K562 (cell line): ENCODE measurements at regions of chr1 and their contacts with region 1.

Region 1: GRCh38 chr1:110203021-110203661 is 7.0 kb upstream of the KCNC4 start:
- DNase-seq: peak; percentile 64 to 80 (median 68)
- ATAC-seq: peak; percentile 75
- H3K4me3 ChIP-seq: no peak overlapping the region
- H3K27ac ChIP-seq: no peak overlapping the region
- H3K4me1 ChIP-seq: no peaks in the 10 kb centered on the region
- H3K27me3 ChIP-seq: peaks cover 3 to 42% of the 10 kb centered on the region in 2 experiments; a peak in 3 of 5 replicates
- CTCF ChIP-seq: peak; percentile 82 to 95 (median 92)
- EP300 ChIP-seq: no peak
- POLR2A ChIP-seq: no peak
- RAD21 ChIP-seq: peak; percentile 93 to 97

Region 2: GRCh38 chr1:109773146-109773899 is 429.8 kb before region 1 on chr1:
- CTCF ChIA-PET with region 1: no interaction called
- POLR2A ChIA-PET with region 1: no interaction called
- in situ Hi-C with region 1: no loop called
- intact Hi-C with region 1: no loop called
- DNase-seq: peak; percentile 67 to 90 (median 76)
- ATAC-seq: peak; percentile 95
- H3K4me3 ChIP-seq: no peak overlapping the region
- H3K27ac ChIP-seq: no peak overlapping the region
- H3K4me1 ChIP-seq: peaks cover 11 to 12% of the 10 kb centered on the region in 2 experiments; a peak in 3 of 5 replicates
- H3K27me3 ChIP-seq: peaks cover 2 to 23% of the 10 kb centered on the region in 2 experiments; a peak in 3 of 5 replicates
- CTCF ChIP-seq: peak; percentile 97 to 99 (median 98)
- EP300 ChIP-seq: no peak
- POLR2A ChIP-seq: no peak
- RAD21 ChIP-seq: peak; percentile 100

Region 3: GRCh38 chr1:110155878-110156522 is 47.1 kb before region 1 on chr1:
- CTCF ChIA-PET with region 1: no interaction called
- POLR2A ChIA-PET with region 1: no interaction called
- in situ Hi-C with region 1: no loop called
- intact Hi-C with region 1: no loop called
- DNase-seq: peak; percentile 67 to 79 (median 77)
- ATAC-seq: peak; percentile 93
- H3K4me3 ChIP-seq: no peak overlapping the region
- H3K27ac ChIP-seq: no peak overlapping the region
- H3K4me1 ChIP-seq: peaks cover 0 to 5% of the 10 kb centered on the region in 2 experiments; a peak in 1 of 5 replicates
- H3K27me3 ChIP-seq: peaks cover 0 to 36% of the 10 kb centered on the region in 2 experiments; a peak in 4 of 5 replicates
- CTCF ChIP-seq: no peak
- EP300 ChIP-seq: no peak
- POLR2A ChIP-seq: no peak
- RAD21 ChIP-seq: no peak

Region 4: GRCh38 chr1:110262846-110263631 is 59.9 kb after region 1 on chr1:
- CTCF ChIA-PET with region 1: no interaction called
- POLR2A ChIA-PET with region 1: no interaction called
- in situ Hi-C with region 1: no loop called
- intact Hi-C with region 1: loop called (anchors 2 kb)
- DNase-seq: peak; percentile 30 to 63 (median 52)
- ATAC-seq: peak; percentile 73
- H3K4me3 ChIP-seq: no peak overlapping the region
- H3K27ac ChIP-seq: no peak overlapping the region
- H3K4me1 ChIP-seq: no peaks in the 10 kb centered on the region; a peak in 1 of 5 replicates
- H3K27me3 ChIP-seq: peaks cover 33 to 49% of the 10 kb centered on the region in 2 experiments
- CTCF ChIP-seq: peak in 2 of 3 experiments; percentile 2 to 23; a peak in 1 of 6 replicates
- EP300 ChIP-seq: no peak
- POLR2A ChIP-seq: no peak
- RAD21 ChIP-seq: peak in 1 of 2 experiments; percentile 44; a peak in 2 of 4 replicates

Region 5: GRCh38 chr1:110412576-110412975 is 209.4 kb after region 1 on chr1:
- CTCF ChIA-PET with region 1: interaction called, 4 read pairs
- POLR2A ChIA-PET with region 1: interaction called, 3 read pairs
- in situ Hi-C with region 1: loop called (anchors 5 kb)
- intact Hi-C with region 1: loop called (anchors 1 kb)
- DNase-seq: peak; percentile 84 to 94 (median 86)
- ATAC-seq: peak; percentile 90
- H3K4me3 ChIP-seq: no peak overlapping the region
- H3K27ac ChIP-seq: peak overlapping the region; percentile 11; the same call in 2 of the 3 replicates
- H3K4me1 ChIP-seq: peaks cover 0 to 40% of the 10 kb centered on the region in 2 experiments; a peak in 4 of 5 replicates
- H3K27me3 ChIP-seq: no peaks in the 10 kb centered on the region
- CTCF ChIP-seq: peak; percentile 92 to 98 (median 97)
- EP300 ChIP-seq: peak; percentile 21; the same call in 1 of the 2 replicates
- POLR2A ChIP-seq: no peak
- RAD21 ChIP-seq: peak; percentile 99

Region 6: GRCh38 chr1:110455151-110455550 is 252.0 kb after region 1 on chr1:
- CTCF ChIA-PET with region 1: interaction called, 58 read pairs
- POLR2A ChIA-PET with region 1: interaction called, 9 read pairs
- in situ Hi-C with region 1: loop called (anchors 5 kb)
- intact Hi-C with region 1: loop called (anchors 1 kb)
- DNase-seq: peak; percentile 44 to 72 (median 58)
- ATAC-seq: peak; percentile 89
- H3K4me3 ChIP-seq: no peak overlapping the region
- H3K27ac ChIP-seq: no peak overlapping the region
- H3K4me1 ChIP-seq: peaks cover 0 to 4% of the 10 kb centered on the region in 2 experiments; a peak in 2 of 5 replicates
- H3K27me3 ChIP-seq: peaks cover 32 to 61% of the 10 kb centered on the region in 2 experiments
- CTCF ChIP-seq: peak; percentile 82 to 94 (median 91)
- EP300 ChIP-seq: no peak
- POLR2A ChIP-seq: no peak
- RAD21 ChIP-seq: peak; percentile 96 to 97

Region 7: DNA sequence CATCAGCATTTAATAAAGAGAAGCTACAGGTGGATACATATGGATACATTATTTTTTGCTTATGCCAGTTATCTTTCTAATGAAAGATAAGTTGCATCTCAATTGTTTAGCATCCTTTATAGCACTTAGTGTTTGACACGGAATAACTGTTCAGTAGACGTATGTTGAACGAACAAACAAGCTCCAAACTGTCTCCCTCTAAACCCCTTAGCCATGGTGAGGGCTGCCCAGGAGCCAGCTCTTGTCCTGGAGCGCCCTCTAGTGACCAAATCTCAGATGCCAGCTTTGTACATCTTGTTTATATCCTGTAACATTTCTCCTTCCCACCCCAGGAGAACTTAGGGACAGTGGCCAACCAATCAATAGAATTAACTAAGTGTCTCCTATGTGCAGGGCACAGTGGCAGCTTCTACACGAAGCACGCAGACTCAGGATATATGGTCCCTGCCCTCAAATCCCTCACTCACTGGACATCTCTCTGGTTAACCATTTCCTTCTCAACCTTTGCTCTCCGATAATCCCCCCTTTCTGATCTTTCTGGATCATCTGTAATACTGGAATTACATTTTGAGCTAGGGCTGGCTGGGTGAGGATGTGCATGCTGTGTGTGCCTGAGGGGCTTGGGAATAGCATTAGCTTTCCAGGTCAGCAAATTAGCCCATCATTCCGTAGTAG is 292.9 kb after region 1 on chr1:
- CTCF ChIA-PET with region 1: interaction called, 45 read pairs
- POLR2A ChIA-PET with region 1: interaction called, 4 read pairs
- in situ Hi-C with region 1: no loop called
- intact Hi-C with region 1: loop called (anchors 1 kb)
- DNase-seq: peak; percentile 86 to 91 (median 90)
- ATAC-seq: peak; percentile 96
- H3K4me3 ChIP-seq: no peak overlapping the region
- H3K27ac ChIP-seq: no peak overlapping the region
- H3K4me1 ChIP-seq: no peaks in the 10 kb centered on the region
- H3K27me3 ChIP-seq: peaks cover 8 to 50% of the 10 kb centered on the region in 2 experiments; a peak in 3 of 5 replicates
- CTCF ChIP-seq: peak; percentile 94 to 99 (median 98)
- EP300 ChIP-seq: no peak
- POLR2A ChIP-seq: no peak
- RAD21 ChIP-seq: peak; percentile 94 to 95